B cell (primary cell): ENCODE measurements at regions of chr9 and their contacts with region 1.

Region 1: GRCh38 chr9:104991144-104991953 is 63.4 kb upstream of the ABCA1 start:
- DNase-seq: peak; percentile 91
- ATAC-seq: peak; percentile 86
- H3K4me3 ChIP-seq: peak overlapping the region; percentile 61 to 88 (median 78)
- H3K4me3 Mint-ChIP-seq: peak overlapping the region; percentile 93
- H3K27ac ChIP-seq: peak overlapping the region; percentile 79 to 83
- H3K27ac Mint-ChIP-seq: peak overlapping the region; percentile 88
- H3K4me1 ChIP-seq: peaks cover 17 to 30% of the 10 kb centered on the region in 2 donors
- H3K4me1 Mint-ChIP-seq: peaks cover 32% of the 10 kb centered on the region
- H3K27me3 ChIP-seq: peaks cover 0 to 6% (median 1%) of the 10 kb centered on the region in 4 experiments
- H3K27me3 Mint-ChIP-seq: peaks cover 9% of the 10 kb centered on the region
- CTCF ChIP-seq: no peak

Region 2: DNA sequence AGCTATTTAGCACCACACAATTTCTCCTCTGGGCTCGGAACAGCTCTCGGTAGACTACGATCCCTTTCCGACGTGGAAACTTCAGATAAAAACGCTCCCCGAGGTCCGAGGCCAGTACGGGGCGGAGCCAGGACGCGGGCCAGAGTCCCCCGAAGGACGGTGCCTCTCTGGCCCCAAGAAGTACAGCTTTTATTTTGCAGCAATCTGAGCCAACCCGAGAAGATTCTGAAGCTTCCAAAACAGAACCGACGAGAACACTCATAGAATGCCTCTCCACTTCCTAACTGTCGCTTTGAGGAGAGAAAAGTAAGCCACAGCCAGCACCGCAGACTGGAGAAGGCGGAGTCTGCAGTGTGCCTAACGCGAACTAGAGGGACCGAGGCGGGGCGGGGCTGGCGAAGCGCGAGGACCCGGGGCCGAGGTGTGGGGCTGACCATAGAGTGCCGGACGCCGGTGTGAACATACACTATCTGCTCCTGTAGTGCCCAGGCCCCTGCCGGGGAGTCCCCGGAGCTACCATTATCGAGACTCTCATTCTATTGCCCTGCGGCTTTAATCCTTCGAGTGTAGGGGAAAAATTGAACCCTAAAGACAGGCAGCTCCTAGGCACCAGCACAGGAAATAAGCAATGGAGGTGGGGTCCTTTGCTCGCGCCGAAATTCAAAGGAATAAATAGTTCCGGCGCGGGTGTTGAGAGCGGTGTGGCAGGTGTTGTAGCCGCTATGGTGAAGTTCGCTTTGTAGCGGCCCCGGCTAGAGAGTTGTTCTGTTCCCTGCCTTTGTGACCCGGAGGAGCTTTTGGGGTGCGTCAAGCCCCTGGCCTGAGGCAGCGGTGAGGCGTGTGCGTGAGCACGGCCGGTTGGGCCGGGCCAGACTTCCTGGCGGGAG is 897.5 kb before region 1 on chr9 and contains the start of gene SMC2:
- CTCF ChIA-PET with region 1: no interaction called
- POLR2A ChIA-PET with region 1: no interaction called
- intact Hi-C with region 1: loop called (anchors 2 kb)
- DNase-seq: peak; percentile 97
- ATAC-seq: peak; percentile 98
- H3K4me3 ChIP-seq: peak within 1 kb of the TSS; percentile 62 to 97 (median 80)
- H3K4me3 Mint-ChIP-seq: peak within 1 kb of the TSS; percentile 99
- H3K27ac ChIP-seq: peak within 1 kb of the TSS; percentile 97 to 98
- H3K27ac Mint-ChIP-seq: peak within 1 kb of the TSS; percentile 100
- H3K4me1 ChIP-seq: peaks cover 16 to 17% of the 10 kb centered on the region in 2 donors
- H3K4me1 Mint-ChIP-seq: peaks cover 36% of the 10 kb centered on the region
- H3K27me3 ChIP-seq: no peaks in the 10 kb centered on the region
- H3K27me3 Mint-ChIP-seq: no peaks in the 10 kb centered on the region
- CTCF ChIP-seq: no peak
- total RNA-seq, gene SMC2: 9.3 and 10.6 TPM in 2 replicates

Region 3: DNA sequence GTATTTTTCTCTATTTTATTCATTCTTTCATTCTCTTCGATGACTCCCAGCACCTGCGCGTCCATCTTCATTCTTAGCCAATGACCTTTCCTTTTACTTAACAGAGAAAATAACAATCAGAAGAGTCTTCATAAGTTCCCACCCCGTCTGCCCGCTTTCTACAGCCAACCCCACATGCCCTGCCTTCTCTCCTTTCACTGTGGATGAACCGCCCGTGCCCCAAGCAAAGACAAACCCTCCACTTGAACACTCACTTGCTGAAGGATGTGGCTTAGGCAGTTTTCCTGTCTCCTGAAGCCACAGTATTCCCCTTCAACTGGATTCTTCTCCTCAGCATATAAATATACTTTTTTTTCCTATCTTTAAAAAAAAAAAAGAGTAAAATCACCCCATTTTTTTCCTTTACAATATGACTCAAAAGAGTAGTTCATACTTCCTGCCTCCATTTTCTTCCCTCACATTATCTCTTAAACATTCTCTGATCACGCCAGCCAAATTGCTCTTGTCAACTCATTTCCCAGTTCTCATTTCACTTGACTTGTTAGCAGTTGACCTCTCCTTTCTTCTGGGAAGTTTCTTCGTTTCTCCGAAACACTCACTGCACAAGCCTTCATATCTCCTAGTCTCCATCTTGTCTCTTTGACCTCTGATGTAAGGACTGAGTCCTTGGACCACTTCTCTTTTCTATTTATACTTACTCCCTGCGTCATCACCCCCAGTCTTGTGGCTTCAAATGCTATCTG is 216.3 kb before region 1 on chr9:
- CTCF ChIA-PET with region 1: no interaction called
- POLR2A ChIA-PET with region 1: no interaction called
- intact Hi-C with region 1: loop called (anchors 5 kb)
- DNase-seq: peak; percentile 86
- ATAC-seq: peak; percentile 90
- H3K4me3 ChIP-seq: peak overlapping the region in 4 of 5 experiments; percentile 3 to 48 (median 36)
- H3K4me3 Mint-ChIP-seq: no peak overlapping the region
- H3K27ac ChIP-seq: peak overlapping the region; percentile 77 to 81
- H3K27ac Mint-ChIP-seq: no peak overlapping the region
- H3K4me1 ChIP-seq: peaks cover 38 to 43% of the 10 kb centered on the region in 2 donors
- H3K4me1 Mint-ChIP-seq: peaks cover 34% of the 10 kb centered on the region
- H3K27me3 ChIP-seq: no peaks in the 10 kb centered on the region
- H3K27me3 Mint-ChIP-seq: no peaks in the 10 kb centered on the region
- CTCF ChIP-seq: no peak

Region 4: DNA sequence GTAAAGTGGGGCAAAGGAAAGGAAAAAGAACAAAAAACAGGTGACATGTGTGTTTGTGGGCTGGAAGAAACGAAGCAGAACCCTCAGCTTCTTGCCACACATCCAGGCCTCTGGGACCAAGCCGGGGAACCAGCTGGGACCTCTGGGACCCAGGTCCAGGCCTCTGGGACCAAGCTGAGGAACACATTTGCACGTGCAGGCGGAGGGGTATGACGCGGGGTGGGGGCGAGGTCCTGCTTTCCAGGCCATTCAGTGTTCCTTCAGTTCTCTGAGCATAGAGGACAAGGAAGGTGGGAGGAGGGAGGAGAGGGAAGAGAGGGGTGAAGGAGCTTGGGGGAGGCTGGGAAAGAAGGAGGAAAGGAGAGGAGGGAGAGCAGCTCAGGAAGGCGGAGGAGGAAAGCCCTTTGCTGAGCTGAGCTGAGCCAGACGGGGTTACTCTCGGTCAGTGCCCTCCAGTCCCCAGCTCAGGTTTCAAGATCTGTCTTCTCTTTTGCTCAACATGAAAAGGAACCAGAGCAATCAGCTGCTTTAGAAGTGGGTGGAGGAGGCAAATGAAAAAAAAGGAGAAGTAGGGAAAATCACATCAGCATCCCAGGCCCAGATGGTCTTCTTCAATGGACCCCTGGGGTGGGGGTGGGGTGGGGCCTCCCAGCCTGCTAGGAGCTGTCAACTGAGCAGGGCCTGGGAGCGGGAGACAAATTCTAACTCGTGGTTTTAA is 122.5 kb before region 1 on chr9:
- CTCF ChIA-PET with region 1: interaction called, 4 read pairs
- POLR2A ChIA-PET with region 1: interaction called, 4 read pairs
- intact Hi-C with region 1: loop called (anchors 2 kb)
- DNase-seq: peak; percentile 83
- ATAC-seq: peak; percentile 88
- H3K4me3 ChIP-seq: peak overlapping the region in 1 of 5 experiments; percentile 2
- H3K4me3 Mint-ChIP-seq: peak overlapping the region; percentile 74
- H3K27ac ChIP-seq: peak overlapping the region; percentile 54 to 69
- H3K27ac Mint-ChIP-seq: peak overlapping the region; percentile 81
- H3K4me1 ChIP-seq: peaks cover 18 to 35% of the 10 kb centered on the region in 2 donors
- H3K4me1 Mint-ChIP-seq: peaks cover 39% of the 10 kb centered on the region
- H3K27me3 ChIP-seq: no peaks in the 10 kb centered on the region
- H3K27me3 Mint-ChIP-seq: no peaks in the 10 kb centered on the region
- CTCF ChIP-seq: no peak

Region 5: DNA sequence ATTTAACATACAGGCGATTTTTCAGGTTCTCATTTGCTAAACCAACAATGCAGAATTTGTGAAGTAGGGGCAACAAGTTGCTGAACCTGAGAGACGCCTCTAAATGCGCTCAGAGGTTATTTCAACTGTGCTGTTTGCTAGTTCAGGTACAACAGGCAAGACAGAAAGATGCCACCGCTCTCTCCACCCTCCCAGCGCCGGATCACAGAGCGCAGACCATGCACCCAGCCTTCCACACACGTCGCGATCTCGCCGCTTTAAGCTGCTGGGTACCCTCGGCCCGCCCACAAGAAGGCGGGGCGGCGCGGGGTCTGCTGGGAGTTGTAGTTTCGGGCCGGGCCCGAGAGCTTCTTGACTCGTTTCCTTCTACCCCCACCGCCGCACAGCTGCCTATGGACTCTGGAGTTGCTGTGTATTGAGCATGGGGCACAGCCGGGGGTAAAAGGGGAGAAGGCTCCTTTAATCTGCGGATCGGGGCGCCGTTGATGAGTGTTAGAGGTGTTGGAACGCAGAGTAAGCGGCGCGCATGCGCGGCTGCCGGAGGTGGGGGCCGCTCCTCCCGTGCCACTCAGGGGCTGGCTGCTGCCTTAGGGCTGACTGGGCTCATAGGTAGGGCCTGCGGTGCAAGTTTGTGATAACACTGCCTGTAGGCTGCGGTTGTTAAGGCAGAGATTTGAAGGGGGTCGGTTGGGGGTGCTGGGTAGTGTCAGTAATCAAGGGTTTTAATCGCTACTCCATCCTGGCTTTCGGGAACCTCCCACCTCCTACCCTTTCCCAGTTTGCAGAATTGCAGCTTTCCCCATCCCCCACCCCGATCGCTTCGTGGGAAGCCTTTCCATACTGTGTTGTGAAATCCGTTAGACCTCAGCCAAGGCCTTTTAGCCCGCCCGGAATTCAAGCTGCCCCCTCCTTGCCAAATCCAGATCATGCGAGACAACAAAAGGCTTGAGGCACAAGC is 23.0 kb before region 1 on chr9:
- CTCF ChIA-PET with region 1: interaction called, 3 read pairs
- POLR2A ChIA-PET with region 1: no interaction called
- intact Hi-C with region 1: loop called (anchors 1 kb)
- DNase-seq: peak; percentile 92
- ATAC-seq: peak; percentile 99
- H3K4me3 ChIP-seq: peak overlapping the region; percentile 68 to 86 (median 78)
- H3K4me3 Mint-ChIP-seq: peak overlapping the region; percentile 91
- H3K27ac ChIP-seq: no peak overlapping the region
- H3K27ac Mint-ChIP-seq: peak overlapping the region; percentile 71
- H3K4me1 ChIP-seq: peaks cover 4 to 14% of the 10 kb centered on the region in 2 donors
- H3K4me1 Mint-ChIP-seq: peaks cover 10% of the 10 kb centered on the region
- H3K27me3 ChIP-seq: peaks cover 0 to 4% (median 2%) of the 10 kb centered on the region in 4 experiments
- H3K27me3 Mint-ChIP-seq: peaks cover 21% of the 10 kb centered on the region
- CTCF ChIP-seq: no peak

Region 6: DNA sequence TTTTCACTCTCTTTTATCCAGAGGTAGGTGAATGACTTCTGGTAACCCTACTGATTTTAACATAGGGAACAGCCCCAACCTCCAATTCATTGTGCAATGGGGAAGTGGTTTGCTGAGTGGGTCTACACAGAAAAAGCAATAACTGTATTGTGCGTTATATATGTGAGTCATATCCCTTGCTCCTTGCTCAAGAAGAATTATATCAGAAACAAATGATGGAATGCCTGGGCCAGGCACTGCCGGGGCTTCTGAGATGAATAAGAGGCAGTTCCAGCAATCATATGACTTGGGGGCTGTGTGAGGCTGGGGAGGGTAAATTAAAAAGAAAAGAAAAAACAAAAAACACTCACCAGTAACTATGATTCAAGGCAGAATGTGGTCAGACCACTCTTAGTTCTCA is 15.8 kb after region 1 on chr9:
- CTCF ChIA-PET with region 1: no interaction called
- POLR2A ChIA-PET with region 1: no interaction called
- intact Hi-C with region 1: no loop called
- DNase-seq: no peak
- ATAC-seq: no peak
- H3K4me3 ChIP-seq: no peak overlapping the region
- H3K4me3 Mint-ChIP-seq: no peak overlapping the region
- H3K27ac ChIP-seq: no peak overlapping the region
- H3K27ac Mint-ChIP-seq: no peak overlapping the region
- H3K4me1 ChIP-seq: no peaks in the 10 kb centered on the region
- H3K4me1 Mint-ChIP-seq: peaks cover 4% of the 10 kb centered on the region
- H3K27me3 ChIP-seq: no peaks in the 10 kb centered on the region
- H3K27me3 Mint-ChIP-seq: peaks cover 5% of the 10 kb centered on the region
- CTCF ChIP-seq: no peak

Region 7: GRCh38 chr9:105447814-105448812 is 456.8 kb after region 1 on chr9 and contains the start of gene FSD1L:
- CTCF ChIA-PET with region 1: no interaction called
- POLR2A ChIA-PET with region 1: no interaction called
- intact Hi-C with region 1: loop called (anchors 1 kb)
- DNase-seq: peak; percentile 90
- ATAC-seq: peak; percentile 91
- H3K4me3 ChIP-seq: peak within 1 kb of the TSS in 4 of 5 experiments; percentile 69 to 83 (median 74)
- H3K4me3 Mint-ChIP-seq: peak within 1 kb of the TSS; percentile 90
- H3K27ac ChIP-seq: peak within 1 kb of the TSS; percentile 21 to 24
- H3K27ac Mint-ChIP-seq: peak within 1 kb of the TSS; percentile 89
- H3K4me1 ChIP-seq: peaks cover 9 to 11% of the 10 kb centered on the region in 2 donors
- H3K4me1 Mint-ChIP-seq: peaks cover 17% of the 10 kb centered on the region
- H3K27me3 ChIP-seq: no peaks in the 10 kb centered on the region
- H3K27me3 Mint-ChIP-seq: no peaks in the 10 kb centered on the region
- CTCF ChIP-seq: no peak
- total RNA-seq, gene FSD1L: 9.8 and 15.2 TPM in 2 replicates

Region 8: GRCh38 chr9:105694190-105694847 is 703.0 kb after region 1 on chr9 and contains the start of gene TMEM38B:
- CTCF ChIA-PET with region 1: no interaction called
- POLR2A ChIA-PET with region 1: no interaction called
- intact Hi-C with region 1: loop called (anchors 5 kb)
- DNase-seq: peak; percentile 90
- ATAC-seq: peak; percentile 83
- H3K4me3 ChIP-seq: peak within 1 kb of the TSS; percentile 75 to 93 (median 82)
- H3K4me3 Mint-ChIP-seq: peak within 1 kb of the TSS; percentile 95
- H3K27ac ChIP-seq: peak within 1 kb of the TSS; percentile 58 to 77
- H3K27ac Mint-ChIP-seq: peak within 1 kb of the TSS; percentile 92
- H3K4me1 ChIP-seq: peaks cover 17 to 18% of the 10 kb centered on the region in 2 donors
- H3K4me1 Mint-ChIP-seq: peaks cover 19% of the 10 kb centered on the region
- H3K27me3 ChIP-seq: peaks cover 0 to 14% (median 11%) of the 10 kb centered on the region in 4 experiments
- H3K27me3 Mint-ChIP-seq: peaks cover 26% of the 10 kb centered on the region
- CTCF ChIP-seq: no peak
- total RNA-seq, gene TMEM38B: 29.6 and 35.2 TPM in 2 replicates